Posterior vena cava (tissue), 2 donors: ENCODE measurements at regions of chr3 and their contacts with region 1.

Region 1: DNA sequence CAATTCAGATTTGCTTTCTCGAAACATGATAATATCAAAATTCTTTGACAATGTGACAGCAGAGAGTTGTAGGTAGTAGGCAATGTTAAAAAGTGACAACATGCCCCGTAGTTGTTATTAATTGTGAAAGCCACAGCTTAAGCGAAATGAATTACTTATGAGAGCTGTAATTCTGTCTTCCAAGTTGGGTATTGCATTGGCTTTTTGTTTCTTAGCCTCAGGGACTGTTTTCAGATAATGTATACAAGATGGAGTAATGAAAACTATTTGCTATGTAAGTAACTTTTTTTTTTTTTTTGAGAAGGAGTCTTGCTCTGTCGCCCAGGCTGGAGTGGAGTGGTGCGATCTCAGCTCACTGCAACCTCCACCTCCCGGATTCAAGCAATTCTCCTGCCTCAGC is 43.1 kb upstream of the MAP3K13 start:
- DNase-seq: no peak

Region 2: GRCh38 chr3:185290266-185290665 is 29.5 kb before region 1 on chr3:
- intact Hi-C with region 1: loop called in 1 of 2 experiments (anchors 1 kb)
- DNase-seq: no peak

Region 3: GRCh38 chr3:185865247-185865646 is 545.4 kb after region 1 on chr3:
- intact Hi-C with region 1: no loop called
- DNase-seq: no peak

Region 4: GRCh38 chr3:185929192-185930151 is 609.7 kb after region 1 on chr3:
- intact Hi-C with region 1: no loop called
- DNase-seq: no peak